SK-N-SH (cell line): ENCODE measurements at regions of chr11 and their contacts with region 1.

Region 1: DNA sequence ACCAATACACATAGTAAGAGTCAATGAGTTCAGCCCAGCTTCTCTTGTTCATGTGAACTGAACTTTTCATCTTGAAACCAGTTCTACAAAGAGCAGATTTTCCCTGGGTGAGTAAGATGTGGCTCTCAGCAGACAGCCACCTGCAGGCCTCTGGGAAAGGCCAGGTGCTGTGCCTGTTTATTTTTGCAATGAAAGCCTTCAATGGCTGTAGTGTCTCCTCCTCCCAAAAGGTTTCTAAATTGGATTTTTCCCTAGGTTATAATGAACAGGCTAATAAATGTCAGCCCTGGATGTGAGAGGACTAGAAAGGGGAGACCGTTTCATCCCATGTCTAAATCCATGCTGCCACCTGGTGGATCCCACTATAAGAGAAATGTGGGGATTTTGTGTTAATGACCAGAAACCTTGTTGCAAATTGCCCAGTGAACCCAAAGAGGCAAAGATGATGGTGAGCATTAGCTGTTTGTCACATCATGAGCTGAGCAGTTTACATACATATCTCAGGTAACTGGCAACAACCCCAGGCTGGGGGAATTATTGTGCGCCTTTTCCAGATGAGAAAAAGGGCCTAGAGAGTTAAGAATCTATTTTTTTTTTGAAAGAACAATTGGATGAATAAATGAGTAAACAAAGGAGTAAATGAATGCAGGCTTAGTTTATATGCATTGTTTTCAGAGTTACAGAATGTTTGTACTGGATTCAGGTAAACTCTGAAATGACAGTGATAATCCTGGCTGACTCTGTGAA is 12.7 kb downstream of the C11orf91 start:
- DNase-seq: peak; percentile 71
- H3K4me3 ChIP-seq: no peak overlapping the region; a peak in 1 of 4 replicates
- H3K27ac ChIP-seq: peak overlapping the region in 1 of 2 experiments; percentile 100; a peak in 2 of 4 replicates
- H3K4me1 ChIP-seq: peaks cover 12 to 45% of the 10 kb centered on the region in 2 experiments
- H3K27me3 ChIP-seq: no peaks in the 10 kb centered on the region
- CTCF ChIP-seq: peak; percentile 88
- EP300 ChIP-seq: no peak
- RAD21 ChIP-seq: peak; percentile 98

Region 2: GRCh38 chr11:33161120-33162005 is 526.5 kb before region 1 on chr11 and contains the start of gene CSTF3:
- CTCF ChIA-PET with region 1: interaction called, 47 read pairs
- POLR2A ChIA-PET with region 1: no interaction called
- DNase-seq: peak; percentile 93
- H3K4me3 ChIP-seq: peak within 1 kb of the TSS; percentile 77 to 86
- H3K27ac ChIP-seq: peak within 1 kb of the TSS; percentile 84 to 88
- H3K4me1 ChIP-seq: peaks cover 2 to 31% of the 10 kb centered on the region in 2 experiments; a peak in 3 of 4 replicates
- H3K27me3 ChIP-seq: no peaks in the 10 kb centered on the region
- CTCF ChIP-seq: no peak; the same call in 1 of the 2 replicates
- EP300 ChIP-seq: peak; percentile 36 to 38; a peak in 2 of 4 replicates
- RAD21 ChIP-seq: no peak
- polyA plus RNA-seq, gene CSTF3: 26.3 and 34.6 TPM in 2 replicates

Region 3: DNA sequence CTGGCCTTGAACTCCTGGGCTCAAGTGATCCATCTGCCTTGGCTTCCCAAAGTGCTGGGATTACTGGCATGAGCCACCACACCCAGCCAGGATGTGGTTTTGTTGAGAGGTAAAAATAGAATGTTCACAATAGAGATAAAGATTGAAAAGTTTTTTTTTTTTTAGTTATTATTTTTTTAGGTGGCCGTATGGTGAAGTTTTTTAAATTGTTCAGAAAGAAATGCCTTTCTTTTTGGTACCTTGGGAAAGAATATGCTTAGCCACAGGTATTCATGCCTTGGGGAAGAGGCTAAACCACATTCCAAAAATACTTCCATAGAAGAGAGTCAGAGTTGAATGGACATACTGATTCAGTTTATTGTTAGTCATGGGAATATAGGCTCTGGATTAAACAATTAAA is 130.7 kb before region 1 on chr11:
- CTCF ChIA-PET with region 1: no interaction called
- POLR2A ChIA-PET with region 1: no interaction called
- DNase-seq: no peak
- H3K4me3 ChIP-seq: no peak overlapping the region
- H3K27ac ChIP-seq: peak overlapping the region in 1 of 2 experiments; percentile 87; a peak in 2 of 4 replicates
- H3K4me1 ChIP-seq: peaks cover 0 to 4% of the 10 kb centered on the region in 2 experiments; a peak in 2 of 4 replicates
- H3K27me3 ChIP-seq: no peaks in the 10 kb centered on the region
- CTCF ChIP-seq: no peak
- EP300 ChIP-seq: peak in 1 of 2 experiments; percentile 47; a peak in 1 of 4 replicates
- RAD21 ChIP-seq: no peak

Region 4: DNA sequence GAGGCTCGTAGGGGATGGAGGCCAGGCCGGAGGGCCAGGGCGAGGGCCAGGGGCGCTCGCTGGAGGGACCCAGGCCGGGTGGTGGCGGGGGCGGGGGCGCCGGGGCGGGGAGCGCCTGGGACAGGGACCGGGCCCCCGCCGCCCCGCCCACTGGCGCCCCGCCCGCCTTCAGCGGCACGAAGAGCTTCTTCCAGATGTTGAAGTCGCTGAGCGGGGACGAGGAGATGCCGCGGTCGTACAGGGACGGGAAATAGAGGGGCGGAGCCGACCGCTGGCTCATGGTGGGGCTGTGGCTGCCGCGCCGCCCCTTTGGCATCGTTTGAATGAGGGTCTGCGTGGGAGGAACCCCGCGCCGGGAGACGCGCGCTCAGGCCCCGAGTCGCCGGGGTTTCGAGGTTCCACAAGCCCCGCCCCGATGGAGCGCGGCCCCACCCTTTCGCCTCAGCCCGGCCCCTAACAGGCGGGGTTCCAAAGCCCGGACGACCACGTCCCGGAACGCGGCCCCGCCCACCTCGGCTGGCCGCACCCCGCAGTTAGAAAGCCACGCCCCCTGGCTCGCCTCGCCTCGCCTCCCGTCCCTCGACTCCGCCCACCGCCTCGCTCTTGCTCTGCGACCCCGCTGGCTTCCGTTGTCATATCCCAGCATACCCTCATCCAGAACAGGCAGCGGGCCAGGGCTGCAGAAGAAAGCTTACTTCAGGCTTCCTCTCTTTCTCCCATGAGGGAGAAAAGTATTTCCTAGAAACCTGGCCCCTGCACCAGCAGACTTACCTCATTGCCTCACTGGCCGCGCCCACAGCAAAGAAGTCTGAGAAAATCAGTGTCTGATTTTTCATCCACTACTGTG is 12.7 kb after region 1 on chr11 and contains the start of gene C11orf91:
- CTCF ChIA-PET with region 1: interaction called, 15 read pairs
- POLR2A ChIA-PET with region 1: interaction called, 4 read pairs
- DNase-seq: peak; percentile 98
- H3K4me3 ChIP-seq: peak within 1 kb of the TSS; percentile 49 to 59
- H3K27ac ChIP-seq: peak within 1 kb of the TSS; percentile 93 to 94
- H3K4me1 ChIP-seq: peaks cover 13 to 36% of the 10 kb centered on the region in 2 experiments; a peak in 2 of 4 replicates
- H3K27me3 ChIP-seq: no peaks in the 10 kb centered on the region
- CTCF ChIP-seq: no peak
- EP300 ChIP-seq: no peak
- RAD21 ChIP-seq: no peak
- polyA plus RNA-seq, gene C11orf91: 0.10 and 0.15 TPM in 2 replicates